GM12878 (cell line): ENCODE measurements at regions of chr1 and their contacts with region 1.

Region 1: GRCh38 chr1:171485375-171486047 is at the start of gene PRRC2C:
- DNase-seq: peak; percentile 90
- ATAC-seq: peak; percentile 93
- H3K4me3 ChIP-seq: peak within 1 kb of the TSS; percentile 92
- H3K27ac ChIP-seq: peak within 1 kb of the TSS; percentile 98
- H3K4me1 ChIP-seq: no peaks in the 10 kb centered on the region; the same call in 1 of the 2 replicates
- H3K27me3 ChIP-seq: no peaks in the 10 kb centered on the region
- CTCF ChIP-seq: peak; percentile 73 to 98 (median 88)
- EP300 ChIP-seq: peak; percentile 22 to 26; a peak in 1 of 4 replicates
- POLR2A ChIP-seq: peak; percentile 82
- RAD21 ChIP-seq: peak; percentile 82
- polyA plus RNA-seq, gene PRRC2C: 53.4 to 74.2 TPM

Region 2: DNA sequence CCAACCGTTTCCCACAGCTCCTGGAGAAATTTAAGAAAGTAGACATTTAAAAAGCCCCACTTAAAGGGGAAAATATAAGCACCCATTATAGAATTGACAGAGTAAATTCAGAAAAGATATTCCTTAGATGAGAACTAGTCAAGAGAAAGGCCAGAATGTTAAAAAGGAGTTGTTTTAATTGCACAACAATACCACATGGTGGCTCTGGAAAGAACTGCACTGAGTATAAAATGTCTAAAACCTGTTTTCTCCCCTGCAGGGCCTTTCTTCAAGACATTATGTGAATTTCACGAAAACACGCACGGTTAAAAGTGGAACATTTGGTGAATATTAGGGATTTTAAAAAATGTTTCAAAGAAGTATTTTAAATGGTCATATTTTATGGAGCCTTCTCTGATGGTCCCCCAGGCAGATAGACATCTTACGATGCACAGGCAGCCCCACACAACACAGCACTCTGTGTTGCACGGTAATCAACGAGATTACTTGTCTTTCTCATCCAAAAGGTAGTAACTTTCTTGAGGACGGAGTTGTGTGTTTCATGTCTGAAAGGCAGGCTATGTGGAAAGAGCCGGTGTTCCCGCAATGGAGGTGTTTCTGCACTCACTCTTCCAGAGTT is 719.7 kb before region 1 on chr1:
- CTCF ChIA-PET with region 1: no interaction called
- POLR2A ChIA-PET with region 1: no interaction called
- RAD21 ChIA-PET with region 1: no interaction called
- SMC1A ChIA-PET with region 1: no interaction called
- in situ Hi-C with region 1: no loop called
- intact Hi-C with region 1: no loop called
- DNase-seq: no peak
- ATAC-seq: peak; percentile 63; the same call in 2 of the 3 replicates
- H3K4me3 ChIP-seq: no peak overlapping the region
- H3K27ac ChIP-seq: no peak overlapping the region
- H3K4me1 ChIP-seq: no peaks in the 10 kb centered on the region
- H3K27me3 ChIP-seq: no peaks in the 10 kb centered on the region
- CTCF ChIP-seq: peak in 1 of 3 experiments; percentile 48; a peak in 1 of 6 replicates
- EP300 ChIP-seq: no peak
- POLR2A ChIP-seq: no peak
- RAD21 ChIP-seq: 0 out of 2 replicates have a peak, but pooled peaks have one; percentile 32

Region 3: GRCh38 chr1:171434717-171435346 is 50.7 kb before region 1 on chr1:
- CTCF ChIA-PET with region 1: no interaction called
- POLR2A ChIA-PET with region 1: no interaction called
- RAD21 ChIA-PET with region 1: no interaction called
- SMC1A ChIA-PET with region 1: no interaction called
- in situ Hi-C with region 1: no loop called
- intact Hi-C with region 1: no loop called
- DNase-seq: no peak
- ATAC-seq: no peak
- H3K4me3 ChIP-seq: no peak overlapping the region
- H3K27ac ChIP-seq: no peak overlapping the region
- H3K4me1 ChIP-seq: no peaks in the 10 kb centered on the region
- H3K27me3 ChIP-seq: no peaks in the 10 kb centered on the region
- CTCF ChIP-seq: no peak
- EP300 ChIP-seq: no peak
- POLR2A ChIP-seq: no peak
- RAD21 ChIP-seq: no peak

Region 4: GRCh38 chr1:171500803-171501202 is 15.3 kb after region 1 on chr1:
- CTCF ChIA-PET with region 1: interaction called, 20 read pairs
- POLR2A ChIA-PET with region 1: interaction called, 3 read pairs
- RAD21 ChIA-PET with region 1: interaction called, 4 read pairs
- SMC1A ChIA-PET with region 1: interaction called, 10 read pairs
- in situ Hi-C with region 1: no loop called
- intact Hi-C with region 1: no loop called
- DNase-seq: no peak
- ATAC-seq: peak; percentile 13
- H3K4me3 ChIP-seq: no peak overlapping the region
- H3K27ac ChIP-seq: no peak overlapping the region
- H3K4me1 ChIP-seq: peaks cover 21% of the 10 kb centered on the region
- H3K27me3 ChIP-seq: no peaks in the 10 kb centered on the region
- CTCF ChIP-seq: no peak
- EP300 ChIP-seq: no peak
- POLR2A ChIP-seq: no peak
- RAD21 ChIP-seq: no peak

Region 5: GRCh38 chr1:171595324-171595723 is 109.8 kb after region 1 on chr1:
- CTCF ChIA-PET with region 1: interaction called, 11 read pairs
- POLR2A ChIA-PET with region 1: interaction called, 3 read pairs
- RAD21 ChIA-PET with region 1: interaction called, 3 read pairs
- SMC1A ChIA-PET with region 1: interaction called, 4 read pairs
- in situ Hi-C with region 1: no loop called
- intact Hi-C with region 1: no loop called
- DNase-seq: no peak
- ATAC-seq: peak; percentile 70
- H3K4me3 ChIP-seq: no peak overlapping the region
- H3K27ac ChIP-seq: no peak overlapping the region
- H3K4me1 ChIP-seq: no peaks in the 10 kb centered on the region
- H3K27me3 ChIP-seq: no peaks in the 10 kb centered on the region
- CTCF ChIP-seq: no peak
- EP300 ChIP-seq: 0 out of 4 replicates have a peak, but pooled peaks have one; percentile 27 to 54
- POLR2A ChIP-seq: no peak
- RAD21 ChIP-seq: no peak

Region 6: DNA sequence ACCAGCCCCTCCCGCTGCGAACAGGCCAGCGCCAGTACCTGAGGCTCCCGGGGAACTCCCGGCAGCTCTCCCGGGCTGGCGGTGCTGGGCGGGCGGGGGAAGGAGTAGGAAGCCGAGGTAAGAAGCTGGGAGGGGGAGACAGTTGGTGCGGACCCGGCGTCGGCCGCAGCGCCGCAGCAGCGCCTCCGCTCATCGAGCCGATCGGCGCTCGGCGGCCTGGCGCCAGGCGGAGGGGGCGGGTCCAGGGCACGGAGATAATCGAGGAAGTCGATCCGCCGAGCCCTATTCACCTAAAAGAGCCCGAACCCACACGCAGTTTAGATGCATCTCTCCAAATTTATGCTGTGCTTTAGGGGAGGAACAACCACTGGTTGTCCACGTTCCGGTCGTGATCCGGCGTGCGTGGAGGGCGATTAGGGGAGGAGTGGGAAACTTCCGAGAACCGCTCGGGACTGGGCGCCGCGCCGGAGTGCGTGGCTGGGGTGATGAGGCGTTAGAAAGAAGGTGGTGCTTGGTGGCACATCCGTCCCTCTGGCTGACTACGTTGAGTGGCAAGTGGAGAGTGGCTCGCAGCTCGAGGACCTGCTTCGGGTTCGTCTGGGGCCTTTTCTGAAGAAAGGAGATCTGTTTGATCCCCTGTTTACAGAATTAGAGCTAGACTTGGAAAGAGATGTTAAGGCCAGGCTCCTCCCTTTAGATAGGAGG is 256.5 kb after region 1 on chr1 and contains the start of gene VAMP4:
- CTCF ChIA-PET with region 1: interaction called, 6 read pairs
- POLR2A ChIA-PET with region 1: interaction called, 10 read pairs
- RAD21 ChIA-PET with region 1: interaction called, 8 read pairs
- SMC1A ChIA-PET with region 1: interaction called, 5 read pairs
- in situ Hi-C with region 1: no loop called
- intact Hi-C with region 1: loop called (anchors 10 kb)
- DNase-seq: peak; percentile 59
- ATAC-seq: peak; percentile 95
- H3K4me3 ChIP-seq: peak within 1 kb of the TSS; percentile 83
- H3K27ac ChIP-seq: peak within 1 kb of the TSS; percentile 92
- H3K4me1 ChIP-seq: peaks cover 4% of the 10 kb centered on the region
- H3K27me3 ChIP-seq: no peaks in the 10 kb centered on the region
- CTCF ChIP-seq: no peak
- EP300 ChIP-seq: no peak
- POLR2A ChIP-seq: peak; percentile 91
- RAD21 ChIP-seq: no peak
- polyA plus RNA-seq, gene VAMP4: 0.90 to 1.5 TPM

Region 7: DNA sequence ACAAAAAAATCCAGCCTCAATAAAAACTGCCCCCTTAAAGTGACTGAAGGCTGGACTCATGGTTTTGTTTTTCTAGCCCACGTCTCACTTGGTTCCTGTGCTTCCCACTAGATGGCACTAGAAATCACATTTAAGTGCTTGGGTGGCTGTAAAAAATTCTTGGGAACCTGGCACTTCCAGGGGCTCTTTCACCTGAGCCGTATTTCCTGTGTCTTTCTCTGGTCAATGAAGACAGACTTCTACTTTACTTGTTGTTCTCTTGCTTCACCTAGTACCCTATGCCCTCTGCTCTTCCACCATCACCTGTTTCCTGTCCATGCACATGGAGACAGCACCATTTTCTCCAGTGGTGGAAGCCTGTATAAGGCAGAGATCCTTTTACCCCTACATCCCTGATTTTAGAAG is 316.0 kb after region 1 on chr1:
- CTCF ChIA-PET with region 1: interaction called, 10 read pairs
- POLR2A ChIA-PET with region 1: no interaction called
- RAD21 ChIA-PET with region 1: interaction called, 4 read pairs
- SMC1A ChIA-PET with region 1: interaction called, 5 read pairs
- in situ Hi-C with region 1: no loop called
- intact Hi-C with region 1: no loop called
- DNase-seq: no peak
- ATAC-seq: peak; percentile 58
- H3K4me3 ChIP-seq: no peak overlapping the region
- H3K27ac ChIP-seq: no peak overlapping the region
- H3K4me1 ChIP-seq: peaks cover 7% of the 10 kb centered on the region
- H3K27me3 ChIP-seq: no peaks in the 10 kb centered on the region
- CTCF ChIP-seq: peak; percentile 71 to 72 (median 72)
- EP300 ChIP-seq: no peak
- POLR2A ChIP-seq: no peak
- RAD21 ChIP-seq: peak; percentile 80